Adrenal gland (tissue), 19 donors: ENCODE measurements at regions of chr1 and their contacts with region 1.

Region 1: DNA sequence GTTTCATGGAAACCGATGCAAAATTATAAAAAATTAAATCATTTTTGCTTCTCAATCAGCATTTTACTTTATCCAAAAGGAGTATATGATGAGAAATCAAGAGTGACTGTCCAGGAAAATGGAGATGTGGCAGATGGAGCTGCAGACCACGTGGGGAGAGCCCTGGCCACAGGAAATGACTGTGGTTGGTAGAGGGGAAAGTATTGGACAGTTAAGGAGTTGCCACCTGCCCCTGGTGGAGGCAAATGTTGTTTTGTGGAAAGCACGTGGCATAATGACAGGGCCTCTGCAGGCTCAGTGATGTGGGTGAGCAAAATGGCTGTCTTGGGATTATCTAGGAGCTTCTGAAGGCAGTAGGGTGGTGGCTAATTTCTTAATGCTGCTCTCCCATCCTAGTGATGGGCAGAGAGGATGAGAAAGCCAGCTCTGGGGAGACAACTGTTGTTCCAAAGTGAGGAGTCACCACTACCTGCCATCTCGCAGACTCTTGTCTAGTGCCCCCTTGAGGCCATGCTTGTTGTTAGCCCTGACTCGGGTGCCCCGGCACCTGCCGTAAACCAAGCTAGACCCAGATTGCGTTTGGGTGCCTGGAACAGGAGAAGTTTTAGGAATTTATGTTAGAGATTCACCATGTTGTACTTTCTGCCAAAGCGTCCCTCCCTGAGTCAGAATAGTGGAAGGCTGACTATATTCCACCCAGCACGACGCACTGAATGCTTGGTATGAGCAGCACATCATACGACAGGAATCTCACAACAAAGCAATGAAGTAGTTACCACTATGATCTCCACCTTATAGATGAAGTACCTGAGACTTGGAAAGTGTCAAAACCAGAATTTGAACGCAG is 144.0 kb downstream of the ROR1 start:
- DNase-seq: no peak
- H3K4me3 ChIP-seq: no peak overlapping the region
- H3K27ac ChIP-seq: no peak overlapping the region
- H3K4me1 ChIP-seq: peaks cover 6 to 13% of the 10 kb centered on the region in 2 donors
- H3K27me3 ChIP-seq: no peaks in the 10 kb centered on the region
- CTCF ChIP-seq: no peak
- POLR2A ChIP-seq: no peak

Region 2: DNA sequence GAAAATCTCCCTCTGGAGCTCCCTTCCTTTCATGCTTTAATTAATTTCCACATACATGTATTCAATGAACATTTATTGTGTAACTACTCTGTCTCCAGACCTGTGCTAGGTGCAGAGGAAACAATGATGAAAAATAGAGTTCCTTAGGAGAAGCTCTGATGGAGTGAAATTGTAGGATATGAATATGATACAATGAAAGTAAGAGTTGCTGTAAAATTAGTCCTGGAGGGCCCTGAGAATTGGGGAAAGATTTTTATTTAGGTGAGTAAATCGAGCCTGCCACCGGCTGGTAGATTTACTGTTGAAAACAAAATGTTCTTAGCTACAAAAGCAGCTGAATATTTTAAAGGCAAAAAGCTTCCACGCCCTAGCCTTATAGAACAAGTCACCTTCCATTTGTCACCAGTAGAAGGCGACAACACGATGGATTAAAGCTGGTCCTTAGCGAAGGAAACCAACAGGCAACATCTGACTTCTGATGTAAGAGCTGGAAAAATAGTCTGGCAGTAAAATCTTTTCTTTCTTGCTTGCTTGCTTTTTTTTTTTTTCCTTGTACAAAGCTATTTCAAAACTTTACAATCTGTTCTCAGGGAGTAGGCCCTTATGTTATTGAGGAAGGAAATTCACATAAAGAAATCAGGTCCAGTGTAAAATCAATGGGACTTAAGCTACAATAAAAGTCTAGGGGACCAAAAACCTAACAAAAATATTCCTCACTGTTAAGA is 225.9 kb before region 1 on chr1:
- intact Hi-C with region 1: loop called in 1 of 2 experiments (anchors 10 kb)
- DNase-seq: peak; percentile 57 to 79 (median 64)
- H3K4me3 ChIP-seq: no peak overlapping the region
- H3K27ac ChIP-seq: no peak overlapping the region
- H3K4me1 ChIP-seq: peaks cover 0 to 4% of the 10 kb centered on the region in 2 donors
- H3K27me3 ChIP-seq: no peaks in the 10 kb centered on the region
- CTCF ChIP-seq: peak; percentile 61 to 84 (median 80)
- POLR2A ChIP-seq: no peak

Region 3: DNA sequence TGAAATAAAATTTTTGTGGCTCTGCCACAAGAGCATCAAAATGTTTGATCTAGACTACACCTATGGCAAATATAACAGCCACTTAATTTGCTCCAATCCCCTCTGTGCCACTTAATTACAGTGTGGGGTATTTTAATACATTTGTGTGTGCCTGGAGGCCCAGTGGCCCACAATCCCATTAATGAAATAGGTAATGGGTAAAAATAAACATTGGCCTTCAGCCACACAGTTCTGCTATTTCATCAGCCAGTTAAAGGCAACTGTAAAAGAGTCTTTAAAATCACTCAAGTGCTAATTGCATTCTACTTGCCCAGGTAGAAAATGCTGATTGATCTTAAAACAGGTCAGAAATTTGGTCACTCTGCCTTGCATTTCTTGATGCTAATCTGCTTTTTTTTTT is 134.0 kb after region 1 on chr1:
- intact Hi-C with region 1: no loop called
- DNase-seq: no peak
- H3K4me3 ChIP-seq: no peak overlapping the region
- H3K27ac ChIP-seq: no peak overlapping the region
- H3K4me1 ChIP-seq: no peaks in the 10 kb centered on the region
- H3K27me3 ChIP-seq: no peaks in the 10 kb centered on the region
- CTCF ChIP-seq: no peak
- POLR2A ChIP-seq: no peak